Panc1 (cell line): ENCODE measurements at regions of chr19 and their contacts with region 1.

Region 1: GRCh38 chr19:39623653-39624290 is 21.4 kb downstream of the LGALS13 start:
- DNase-seq: no peak
- ATAC-seq: no peak
- H3K4me3 ChIP-seq: no peak overlapping the region
- H3K27ac ChIP-seq: no peak overlapping the region
- H3K4me1 ChIP-seq: no peaks in the 10 kb centered on the region
- H3K27me3 ChIP-seq: peaks cover 60% of the 10 kb centered on the region
- CTCF ChIP-seq: no peak

Region 2: GRCh38 chr19:39014037-39014436 is 609.7 kb before region 1 on chr19:
- CTCF ChIA-PET with region 1: no interaction called
- POLR2A ChIA-PET with region 1: interaction called, 12 read pairs
- in situ Hi-C with region 1: no loop called
- intact Hi-C with region 1: no loop called
- DNase-seq: no peak
- ATAC-seq: peak; percentile 43
- H3K4me3 ChIP-seq: no peak overlapping the region
- H3K27ac ChIP-seq: no peak overlapping the region
- H3K4me1 ChIP-seq: no peaks in the 10 kb centered on the region
- H3K27me3 ChIP-seq: no peaks in the 10 kb centered on the region
- CTCF ChIP-seq: no peak

Region 3: GRCh38 chr19:39406656-39407393 is 216.9 kb before region 1 on chr19 and contains the start of gene ZFP36:
- CTCF ChIA-PET with region 1: no interaction called
- POLR2A ChIA-PET with region 1: interaction called, 17 read pairs
- in situ Hi-C with region 1: no loop called
- intact Hi-C with region 1: no loop called
- DNase-seq: peak; percentile 100
- ATAC-seq: peak; percentile 37
- H3K4me3 ChIP-seq: peak within 1 kb of the TSS; percentile 42 to 55
- H3K27ac ChIP-seq: peak within 1 kb of the TSS; percentile 92
- H3K4me1 ChIP-seq: peaks cover 76% of the 10 kb centered on the region
- H3K27me3 ChIP-seq: no peaks in the 10 kb centered on the region
- CTCF ChIP-seq: no peak
- total RNA-seq, gene ZFP36: 414 TPM

Region 4: GRCh38 chr19:39557441-39558151 is 66.2 kb before region 1 on chr19:
- CTCF ChIA-PET with region 1: interaction called, 102 read pairs
- POLR2A ChIA-PET with region 1: interaction called, 3 read pairs
- in situ Hi-C with region 1: no loop called
- intact Hi-C with region 1: no loop called
- DNase-seq: peak; percentile 91
- ATAC-seq: peak; percentile 82
- H3K4me3 ChIP-seq: peak overlapping the region; percentile 0 to 36; a peak in 3 of 4 replicates
- H3K27ac ChIP-seq: peak overlapping the region; percentile 0; the same call in 1 of the 2 replicates
- H3K4me1 ChIP-seq: peaks cover 17% of the 10 kb centered on the region
- H3K27me3 ChIP-seq: peaks cover 43% of the 10 kb centered on the region
- CTCF ChIP-seq: no peak

Region 5: GRCh38 chr19:40294560-40294959 is 670.8 kb after region 1 on chr19:
- CTCF ChIA-PET with region 1: no interaction called
- POLR2A ChIA-PET with region 1: no interaction called
- in situ Hi-C with region 1: loop called (anchors 5 kb)
- intact Hi-C with region 1: no loop called
- DNase-seq: no peak
- ATAC-seq: peak; percentile 4
- H3K4me3 ChIP-seq: no peak overlapping the region
- H3K27ac ChIP-seq: no peak overlapping the region
- H3K4me1 ChIP-seq: no peaks in the 10 kb centered on the region
- H3K27me3 ChIP-seq: peaks cover 4% of the 10 kb centered on the region; the same call in 1 of the 2 replicates
- CTCF ChIP-seq: no peak